Posterior vena cava (tissue), 2 donors: ENCODE measurements at regions of chr16 and their contacts with region 1.

Region 1: GRCh38 chr16:6020162-6020985 is 922.8 kb upstream of the EEF2KMT start:
- DNase-seq: no peak

Region 2: GRCh38 chr16:6035161-6035560 is 14.8 kb after region 1 on chr16:
- intact Hi-C with region 1: no loop called
- DNase-seq: no peak

Region 3: DNA sequence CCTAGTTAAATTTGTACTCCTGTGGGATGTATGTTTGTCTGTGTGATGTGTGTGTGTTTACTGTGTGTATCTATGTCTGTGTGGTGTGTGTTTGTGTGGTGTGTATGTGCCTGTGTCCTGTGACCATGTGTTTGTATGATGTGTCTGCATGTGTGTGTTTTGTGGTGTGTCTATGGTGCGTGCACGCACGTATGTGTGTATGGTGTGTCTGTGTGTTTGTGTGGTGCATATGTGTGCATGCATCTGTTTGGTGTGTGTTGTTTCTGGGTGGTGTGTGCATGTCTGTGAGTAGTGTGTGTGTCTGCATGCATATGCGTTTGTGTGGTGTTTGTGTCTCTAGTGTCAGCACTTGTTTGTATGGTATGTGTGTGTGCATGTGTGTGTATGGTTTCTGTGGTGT is 1138.1 kb after region 1 on chr16:
- intact Hi-C with region 1: loop called in 1 of 2 experiments (anchors 10 kb)
- DNase-seq: no peak